ENCODE measurements at regions of chr9 and their contacts with region 1.

Region 1: GRCh38 chr9:69121828-69122548 is 52.1 kb upstream of the TJP2 start:
- DNase-seq: peak; percentile 73 to 75
- ATAC-seq: peak; percentile 80 to 89 (median 87)
- H3K4me3 ChIP-seq: peak overlapping the region; percentile 65 to 91 (median 86)
- H3K27ac ChIP-seq: peak overlapping the region; percentile 55 to 96 (median 90)
- H3K4me1 ChIP-seq: peaks cover 4 to 20% (median 14%) of the 10 kb centered on the region in 9 donors
- H3K27me3 ChIP-seq: no peaks in the 10 kb centered on the region
- CTCF ChIP-seq: peak in 4 of 9 donors; percentile 0 to 27 (median 22)

Region 2: GRCh38 chr9:69056191-69056815 is 65.7 kb before region 1 on chr9:
- intact Hi-C with region 1: loop called in 2 of 10 experiments (anchors 5 to 10 kb)
- DNase-seq: no peak
- ATAC-seq: no peak
- H3K4me3 ChIP-seq: no peak overlapping the region
- H3K27ac ChIP-seq: no peak overlapping the region
- H3K4me1 ChIP-seq: peaks cover 0 to 7% (median 0%) of the 10 kb centered on the region in 9 donors
- H3K27me3 ChIP-seq: no peaks in the 10 kb centered on the region
- CTCF ChIP-seq: no peak

Region 3: GRCh38 chr9:69078581-69078980 is 43.4 kb before region 1 on chr9:
- intact Hi-C with region 1: loop called in 1 of 10 experiments (anchors 5 kb)
- DNase-seq: peak in 1 of 2 donors; percentile 58
- ATAC-seq: peak; percentile 83 to 98 (median 93)
- H3K4me3 ChIP-seq: no peak overlapping the region
- H3K27ac ChIP-seq: peak overlapping the region; percentile 36 to 85 (median 72)
- H3K4me1 ChIP-seq: peaks cover 0 to 41% (median 21%) of the 10 kb centered on the region in 9 donors
- H3K27me3 ChIP-seq: no peaks in the 10 kb centered on the region
- CTCF ChIP-seq: no peak

Region 4: DNA sequence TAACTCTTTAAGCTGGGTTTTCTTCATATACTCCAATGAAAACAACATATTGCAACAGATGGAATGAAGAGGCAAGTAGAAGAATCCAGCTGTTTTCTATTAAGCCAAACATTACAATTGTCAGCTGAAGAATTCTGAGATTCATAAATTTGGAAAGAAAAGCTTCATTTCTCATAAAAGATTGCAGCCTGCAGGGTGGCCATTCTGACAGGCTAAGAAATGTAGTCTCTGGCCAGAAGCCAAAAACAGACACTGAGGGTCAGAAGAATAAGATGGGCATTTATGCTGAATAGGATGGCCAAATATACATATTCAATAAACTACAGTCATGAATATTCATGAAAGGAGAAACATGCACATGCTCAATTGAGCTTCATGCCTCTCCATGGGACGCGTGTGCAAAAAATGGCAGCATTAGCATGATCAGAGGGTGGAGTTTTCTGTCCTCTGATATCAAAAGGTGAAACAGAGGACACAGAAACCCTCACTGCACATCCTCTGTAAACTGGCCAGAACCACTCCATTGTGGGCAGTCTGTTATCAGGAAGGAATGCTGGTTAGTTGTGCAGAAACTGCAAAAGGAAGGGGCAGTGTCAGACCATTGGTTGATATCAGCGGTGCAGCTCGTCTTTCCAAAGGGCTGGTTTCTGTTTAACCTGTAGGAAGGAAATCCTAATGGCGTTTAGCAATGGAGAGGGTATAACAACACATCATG is 36.3 kb before region 1 on chr9:
- intact Hi-C with region 1: loop called in 2 of 10 experiments (anchors 5 kb)
- DNase-seq: no peak
- ATAC-seq: peak; percentile 50 to 79 (median 66)
- H3K4me3 ChIP-seq: no peak overlapping the region
- H3K27ac ChIP-seq: peak overlapping the region in 6 of 10 donors; percentile 24 to 66 (median 42)
- H3K4me1 ChIP-seq: peaks cover 0 to 41% (median 13%) of the 10 kb centered on the region in 9 donors
- H3K27me3 ChIP-seq: no peaks in the 10 kb centered on the region
- CTCF ChIP-seq: no peak

Region 5: DNA sequence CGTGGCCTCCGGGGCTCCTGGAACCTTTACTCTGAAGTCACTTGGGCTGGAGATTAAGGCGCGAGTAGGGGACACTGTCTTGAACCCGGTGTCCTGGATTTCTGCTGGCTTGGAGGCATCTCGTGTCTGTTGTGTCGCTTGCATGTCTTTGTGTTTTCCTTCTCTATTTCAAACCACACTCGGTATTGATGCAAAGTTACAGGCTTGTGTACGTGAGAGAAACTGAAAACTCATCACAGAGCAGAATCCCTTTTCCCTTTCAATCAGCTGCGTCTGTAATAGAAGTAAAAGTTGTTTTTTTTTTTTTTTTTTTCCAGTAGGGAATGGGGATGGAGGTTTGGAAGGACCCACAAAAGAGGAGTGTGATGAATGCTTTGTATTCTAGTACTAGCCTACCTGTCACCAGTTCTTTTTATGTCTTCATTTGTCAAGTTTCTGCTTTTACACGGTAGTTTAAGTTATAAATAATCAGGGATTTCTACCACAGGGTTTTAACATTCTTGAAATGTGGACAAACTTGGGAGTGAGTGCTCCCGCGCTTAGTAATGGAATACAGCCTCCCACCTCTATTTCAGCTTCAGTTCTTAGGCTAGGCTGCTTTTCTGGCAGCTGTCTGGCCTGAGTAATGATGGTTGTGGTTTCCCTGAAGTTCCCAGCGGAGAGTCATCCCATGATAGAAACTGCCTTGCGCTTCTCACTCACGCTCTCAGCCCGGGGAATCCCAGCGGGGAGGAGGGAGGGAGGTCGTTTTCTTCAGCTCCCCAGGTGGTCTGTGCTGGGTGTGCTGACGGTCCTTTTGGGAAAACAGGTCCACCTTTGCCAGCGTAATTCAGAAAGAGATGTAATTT is 52.9 kb after region 1 on chr9:
- intact Hi-C with region 1: loop called in 2 of 10 experiments (anchors 5 kb)
- DNase-seq: peak in 1 of 2 donors; percentile 60
- ATAC-seq: peak; percentile 23 to 68 (median 60)
- H3K4me3 ChIP-seq: peak overlapping the region; percentile 69 to 88 (median 82)
- H3K27ac ChIP-seq: peak overlapping the region; percentile 82 to 94 (median 89)
- H3K4me1 ChIP-seq: peaks cover 3 to 86% (median 63%) of the 10 kb centered on the region in 9 donors
- H3K27me3 ChIP-seq: no peaks in the 10 kb centered on the region
- CTCF ChIP-seq: no peak

Region 6: GRCh38 chr9:70494221-70494620 is 1372.2 kb after region 1 on chr9:
- intact Hi-C with region 1: no loop called
- DNase-seq: peak in 1 of 2 donors; percentile 40
- ATAC-seq: peak in 7 of 8 donors; percentile 36 to 71 (median 46)
- H3K4me3 ChIP-seq: no peak overlapping the region
- H3K27ac ChIP-seq: peak overlapping the region in 9 of 10 donors; percentile 9 to 75 (median 55)
- H3K4me1 ChIP-seq: peaks cover 15 to 55% (median 41%) of the 10 kb centered on the region in 9 donors
- H3K27me3 ChIP-seq: no peaks in the 10 kb centered on the region
- CTCF ChIP-seq: no peak

Measured in heart right ventricle (tissue), 16 donors.